Activated CD8-positive, alpha-beta T cell treated with anti-CD3 and anti-CD28 coated beads for 36 hours (primary cell): ENCODE measurements at regions of chr1 and their contacts with region 1.

Region 1: GRCh38 chr1:145996433-145997015 is at the start of gene TXNIP:
- DNase-seq: peak; percentile 98
- ATAC-seq: peak; percentile 79
- H3K4me3 Mint-ChIP-seq: peak within 1 kb of the TSS; percentile 98
- H3K27ac Mint-ChIP-seq: peak within 1 kb of the TSS; percentile 100
- H3K4me1 Mint-ChIP-seq: peaks cover 61% of the 10 kb centered on the region
- H3K27me3 Mint-ChIP-seq: no peaks in the 10 kb centered on the region
- CTCF ChIP-seq: no peak
- total RNA-seq, gene TXNIP: 130 to 134 TPM

Region 2: GRCh38 chr1:145918144-145918992 is 78.2 kb before region 1 on chr1 and contains the start of gene PEX11B:
- CTCF ChIA-PET with region 1: no interaction called
- POLR2A ChIA-PET with region 1: interaction called, 12 read pairs
- intact Hi-C with region 1: no loop called
- DNase-seq: peak; percentile 96
- ATAC-seq: peak; percentile 92
- H3K4me3 Mint-ChIP-seq: peak within 1 kb of the TSS; percentile 96
- H3K27ac Mint-ChIP-seq: peak within 1 kb of the TSS; percentile 97
- H3K4me1 Mint-ChIP-seq: peaks cover 51% of the 10 kb centered on the region
- H3K27me3 Mint-ChIP-seq: no peaks in the 10 kb centered on the region
- CTCF ChIP-seq: no peak
- total RNA-seq, gene PEX11B: 25.8 to 26.3 TPM

Region 3: DNA sequence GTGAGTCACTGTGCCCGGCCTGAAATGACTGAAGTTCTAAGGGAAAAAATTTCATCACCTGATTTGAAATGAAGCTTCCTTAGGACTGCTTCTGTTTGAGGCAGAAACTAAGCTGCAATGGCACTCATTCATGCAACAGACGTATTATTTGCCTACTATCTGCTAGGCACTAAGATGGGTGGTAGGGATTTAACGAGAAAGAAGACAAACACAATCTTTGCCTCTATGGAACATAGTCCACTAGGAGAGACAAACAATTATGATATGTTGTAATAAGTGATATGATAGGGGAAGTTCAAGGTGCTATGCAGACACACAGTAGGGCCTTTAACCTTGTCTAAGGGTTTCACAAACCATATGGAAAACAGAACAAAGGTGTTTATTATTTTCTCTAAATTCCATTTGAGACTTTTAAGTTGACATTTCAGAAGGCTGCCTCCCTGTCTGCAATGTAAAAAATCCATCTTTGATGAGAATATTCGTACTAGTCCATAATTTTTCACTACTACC is 50.0 kb before region 1 on chr1:
- CTCF ChIA-PET with region 1: no interaction called
- POLR2A ChIA-PET with region 1: no interaction called
- intact Hi-C with region 1: no loop called
- DNase-seq: no peak
- ATAC-seq: no peak
- H3K4me3 Mint-ChIP-seq: no peak overlapping the region
- H3K27ac Mint-ChIP-seq: no peak overlapping the region
- H3K4me1 Mint-ChIP-seq: peaks cover 27% of the 10 kb centered on the region
- H3K27me3 Mint-ChIP-seq: no peaks in the 10 kb centered on the region
- CTCF ChIP-seq: no peak

Region 4: DNA sequence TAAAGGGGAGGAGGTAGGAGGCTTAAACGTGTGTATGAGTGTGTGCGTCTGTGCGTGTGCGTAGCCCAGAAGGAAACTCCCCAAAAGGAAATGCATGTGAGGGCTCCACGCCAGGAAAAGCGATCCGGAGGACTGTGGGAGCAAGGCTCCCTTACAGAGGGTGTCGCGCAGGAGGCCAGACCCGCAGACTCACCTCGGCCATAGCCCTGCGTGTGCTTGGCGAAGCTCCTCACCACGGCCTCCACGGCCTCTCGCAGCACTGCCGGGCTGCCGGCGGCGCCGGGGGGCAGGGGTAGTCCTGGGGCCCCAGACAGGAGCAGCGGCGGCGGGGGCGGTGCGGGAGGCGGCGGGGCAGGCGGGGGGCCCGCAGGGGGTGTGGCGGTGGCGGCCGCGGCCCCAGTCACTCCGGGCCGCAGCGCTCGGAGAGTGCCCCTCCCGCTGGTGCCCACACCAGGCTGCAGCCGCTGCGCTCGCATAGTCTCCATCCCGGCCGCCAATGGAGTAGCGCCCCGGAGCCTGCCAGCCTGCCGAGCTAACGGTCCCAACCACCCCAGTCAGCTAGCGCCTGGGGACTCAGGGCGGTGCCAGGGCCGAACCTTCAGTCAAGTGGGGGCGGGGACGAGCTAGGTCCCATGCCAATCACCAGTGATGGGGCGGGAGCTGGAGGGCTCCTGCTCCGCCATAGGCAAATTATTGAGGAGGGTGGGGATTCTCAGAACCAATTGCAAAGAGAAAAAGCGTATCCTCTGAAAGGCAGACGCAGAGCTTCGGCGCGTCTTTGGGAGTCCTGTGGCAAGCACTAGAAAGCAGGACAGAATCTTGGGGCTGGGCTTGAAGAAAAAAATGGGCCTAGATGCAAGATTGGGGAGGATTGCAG is 38.8 kb before region 1 on chr1 and contains the start of gene LIX1L:
- CTCF ChIA-PET with region 1: interaction called, 3 read pairs
- POLR2A ChIA-PET with region 1: interaction called, 80 read pairs
- intact Hi-C with region 1: no loop called
- DNase-seq: peak; percentile 98
- ATAC-seq: peak; percentile 89
- H3K4me3 Mint-ChIP-seq: peak within 1 kb of the TSS; percentile 83
- H3K27ac Mint-ChIP-seq: peak within 1 kb of the TSS; percentile 91
- H3K4me1 Mint-ChIP-seq: peaks cover 53% of the 10 kb centered on the region
- H3K27me3 Mint-ChIP-seq: no peaks in the 10 kb centered on the region
- CTCF ChIP-seq: no peak
- total RNA-seq, gene LIX1L: 41.5 to 43.6 TPM

Region 5: DNA sequence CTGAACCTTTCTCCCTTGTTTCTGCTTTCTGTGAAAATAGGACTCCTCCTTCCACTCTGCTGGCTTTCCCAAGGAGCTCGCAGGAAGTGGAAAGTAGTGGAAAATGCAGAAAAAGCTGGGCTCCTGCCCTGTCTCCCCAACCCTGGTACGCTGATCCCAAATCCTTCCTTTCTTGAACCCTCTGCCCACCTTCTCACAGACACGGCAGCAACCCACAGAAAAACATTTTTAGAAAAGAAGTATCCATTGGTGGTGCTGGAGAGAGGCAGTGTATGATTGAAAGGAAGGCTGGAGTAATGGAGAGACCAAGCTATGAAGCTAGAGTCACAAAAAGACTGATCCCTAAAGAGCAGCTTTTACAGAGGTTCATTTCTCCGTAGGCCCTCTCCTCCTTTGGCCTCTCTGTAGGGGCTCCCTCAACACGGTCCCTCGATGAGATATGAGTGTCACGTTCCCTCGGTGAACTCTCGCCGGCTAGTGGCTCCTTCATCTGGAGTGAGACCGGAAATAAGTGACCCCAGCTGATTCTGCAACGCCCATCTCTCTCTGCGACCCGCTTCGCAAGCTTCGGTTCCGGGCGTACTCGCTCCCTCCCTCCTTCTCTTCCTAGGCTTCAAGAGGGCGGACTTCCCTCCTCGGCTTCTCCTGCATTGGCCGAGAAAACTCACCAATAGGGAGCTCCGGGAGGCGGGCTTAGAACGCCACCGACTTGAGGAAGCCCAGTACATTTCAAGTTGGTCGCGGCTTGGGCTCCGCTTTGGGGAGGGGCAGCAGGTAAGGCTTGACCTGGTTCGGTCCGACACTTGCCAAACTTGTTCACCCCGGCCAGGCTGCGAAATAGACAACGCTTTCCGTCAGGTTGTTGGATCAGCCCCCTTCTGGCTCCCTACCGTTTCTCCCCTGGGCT is 32.3 kb before region 1 on chr1 and contains the starts of genes ANKRD34A and POLR3GL:
- CTCF ChIA-PET with region 1: no interaction called
- POLR2A ChIA-PET with region 1: interaction called, 80 read pairs
- intact Hi-C with region 1: loop called (anchors 2 kb)
- DNase-seq: peak; percentile 98
- ATAC-seq: peak; percentile 88
- H3K4me3 Mint-ChIP-seq: peak within 1 kb of the TSS; percentile 92
- H3K27ac Mint-ChIP-seq: peak within 1 kb of the TSS; percentile 91
- H3K4me1 Mint-ChIP-seq: peaks cover 30% of the 10 kb centered on the region
- H3K27me3 Mint-ChIP-seq: no peaks in the 10 kb centered on the region
- CTCF ChIP-seq: no peak
- total RNA-seq, gene ANKRD34A: 6.6 to 7.7 TPM
- total RNA-seq, gene POLR3GL: 22.3 to 23.3 TPM

Region 6: GRCh38 chr1:146007506-146008133 is 11.1 kb after region 1 on chr1:
- CTCF ChIA-PET with region 1: interaction called, 24 read pairs
- POLR2A ChIA-PET with region 1: interaction called, 54 read pairs
- intact Hi-C with region 1: no loop called
- DNase-seq: no peak
- ATAC-seq: no peak
- H3K4me3 Mint-ChIP-seq: peak overlapping the region; percentile 50
- H3K27ac Mint-ChIP-seq: peak overlapping the region; percentile 87
- H3K4me1 Mint-ChIP-seq: peaks cover 41% of the 10 kb centered on the region
- H3K27me3 Mint-ChIP-seq: no peaks in the 10 kb centered on the region
- CTCF ChIP-seq: no peak

Region 7: GRCh38 chr1:146036965-146037646 is 40.6 kb after region 1 on chr1:
- CTCF ChIA-PET with region 1: interaction called, 13 read pairs
- POLR2A ChIA-PET with region 1: interaction called, 38 read pairs
- intact Hi-C with region 1: no loop called
- DNase-seq: peak; percentile 92
- ATAC-seq: peak; percentile 35
- H3K4me3 Mint-ChIP-seq: peak overlapping the region; percentile 92
- H3K27ac Mint-ChIP-seq: peak overlapping the region; percentile 98
- H3K4me1 Mint-ChIP-seq: peaks cover 25% of the 10 kb centered on the region
- H3K27me3 Mint-ChIP-seq: peaks cover 7% of the 10 kb centered on the region
- CTCF ChIP-seq: no peak

Region 8: GRCh38 chr1:146049436-146049835 is 52.9 kb after region 1 on chr1:
- CTCF ChIA-PET with region 1: interaction called, 3 read pairs
- POLR2A ChIA-PET with region 1: interaction called, 14 read pairs
- intact Hi-C with region 1: no loop called
- DNase-seq: peak; percentile 16
- ATAC-seq: no peak
- H3K4me3 Mint-ChIP-seq: no peak overlapping the region
- H3K27ac Mint-ChIP-seq: no peak overlapping the region
- H3K4me1 Mint-ChIP-seq: peaks cover 21% of the 10 kb centered on the region
- H3K27me3 Mint-ChIP-seq: no peaks in the 10 kb centered on the region
- CTCF ChIP-seq: no peak